BJ (cell line): ENCODE measurements at regions of chr1 and their contacts with region 1.

Region 1: DNA sequence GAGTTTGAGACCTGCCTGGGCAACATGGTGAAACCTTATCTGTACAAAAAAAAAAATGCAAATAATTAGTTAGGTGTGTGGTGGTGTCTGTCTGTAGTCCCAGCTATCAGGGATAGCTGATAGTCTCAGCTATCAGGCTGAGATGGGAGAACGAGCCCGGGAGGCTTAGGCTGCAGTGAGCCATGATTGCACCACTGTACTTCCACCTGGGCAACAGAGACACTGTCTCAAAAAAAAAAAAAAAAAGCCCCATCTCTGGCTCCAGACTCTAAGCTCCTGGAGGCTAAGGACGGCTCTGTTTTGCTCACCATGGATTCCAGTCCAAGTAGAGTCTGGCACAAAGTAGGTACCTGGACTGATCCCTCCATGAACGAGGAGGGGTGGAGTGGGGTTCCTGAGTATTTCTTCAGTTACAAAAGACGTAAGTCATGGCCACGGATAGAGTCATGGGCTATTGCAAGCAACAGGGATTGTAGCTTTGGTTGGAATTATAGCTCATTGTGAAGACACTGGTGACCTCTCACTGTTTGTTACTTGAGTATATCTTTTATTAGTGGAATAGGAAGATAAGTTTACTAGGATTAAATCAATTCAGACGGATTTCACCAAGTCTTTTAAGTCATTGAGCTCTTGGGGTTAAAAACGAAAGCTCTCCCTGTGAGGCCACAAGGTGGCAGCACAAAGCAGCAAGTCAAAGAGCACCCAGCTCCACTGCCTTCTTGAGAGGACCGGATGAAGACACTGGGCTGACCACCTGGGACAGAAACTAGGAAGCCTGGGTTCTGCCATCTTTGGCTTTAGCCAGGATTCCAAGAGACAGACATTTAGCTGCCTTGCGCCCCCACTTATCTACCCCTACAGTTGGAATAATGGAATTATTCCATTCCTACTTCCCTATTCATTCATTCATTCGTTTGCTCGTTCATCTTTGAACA is 35.6 kb upstream of the TMEM61 start:
- DNase-seq: peak; percentile 34
- H3K4me3 ChIP-seq: no peak overlapping the region
- H3K27me3 ChIP-seq: no peaks in the 10 kb centered on the region
- CTCF ChIP-seq: peak; percentile 84

Region 2: DNA sequence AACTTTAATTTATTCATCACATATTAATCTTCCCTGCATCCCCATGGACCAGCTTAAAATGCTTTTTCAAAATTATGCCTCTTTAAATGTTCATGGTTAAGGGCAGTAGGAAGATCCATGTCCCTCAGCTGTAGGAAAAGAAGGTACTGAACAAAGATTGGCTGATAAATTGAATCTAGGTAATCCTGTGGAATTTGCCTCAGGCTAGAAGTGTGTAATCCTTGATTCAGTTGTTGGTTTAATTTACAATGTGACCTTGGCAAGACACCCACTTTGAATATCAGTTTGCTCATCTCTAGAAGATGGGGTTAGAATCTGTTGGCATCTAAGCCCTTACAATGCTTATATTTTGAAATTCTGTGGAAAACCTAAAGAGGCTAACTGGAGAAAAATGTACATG is 223.2 kb before region 1 on chr1:
- CTCF ChIA-PET with region 1: no interaction called
- POLR2A ChIA-PET with region 1: no interaction called
- DNase-seq: no peak
- H3K4me3 ChIP-seq: no peak overlapping the region
- H3K27me3 ChIP-seq: no peaks in the 10 kb centered on the region
- CTCF ChIP-seq: no peak

Region 3: DNA sequence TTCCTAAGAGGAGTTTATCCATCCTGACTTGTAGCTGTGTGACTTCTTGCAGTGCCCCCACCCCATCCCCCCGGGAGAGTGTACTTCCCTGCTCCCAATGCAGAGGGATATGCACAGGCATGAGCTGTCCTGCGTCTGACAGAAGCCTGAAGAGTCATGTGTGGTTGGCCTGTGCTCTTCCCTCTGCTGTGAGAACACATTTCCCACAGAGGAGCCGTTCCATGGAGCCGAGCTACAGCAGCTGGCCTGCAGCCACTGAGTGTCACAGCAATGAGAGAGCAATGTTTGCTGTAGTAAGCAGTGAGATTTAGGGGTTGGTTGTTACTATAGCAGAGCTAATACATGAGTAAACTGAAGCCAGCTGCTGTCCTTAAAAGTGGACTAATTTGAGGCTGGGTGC is 202.6 kb before region 1 on chr1:
- CTCF ChIA-PET with region 1: no interaction called
- POLR2A ChIA-PET with region 1: no interaction called
- DNase-seq: no peak
- H3K4me3 ChIP-seq: no peak overlapping the region
- H3K27me3 ChIP-seq: no peaks in the 10 kb centered on the region
- CTCF ChIP-seq: no peak

Region 4: DNA sequence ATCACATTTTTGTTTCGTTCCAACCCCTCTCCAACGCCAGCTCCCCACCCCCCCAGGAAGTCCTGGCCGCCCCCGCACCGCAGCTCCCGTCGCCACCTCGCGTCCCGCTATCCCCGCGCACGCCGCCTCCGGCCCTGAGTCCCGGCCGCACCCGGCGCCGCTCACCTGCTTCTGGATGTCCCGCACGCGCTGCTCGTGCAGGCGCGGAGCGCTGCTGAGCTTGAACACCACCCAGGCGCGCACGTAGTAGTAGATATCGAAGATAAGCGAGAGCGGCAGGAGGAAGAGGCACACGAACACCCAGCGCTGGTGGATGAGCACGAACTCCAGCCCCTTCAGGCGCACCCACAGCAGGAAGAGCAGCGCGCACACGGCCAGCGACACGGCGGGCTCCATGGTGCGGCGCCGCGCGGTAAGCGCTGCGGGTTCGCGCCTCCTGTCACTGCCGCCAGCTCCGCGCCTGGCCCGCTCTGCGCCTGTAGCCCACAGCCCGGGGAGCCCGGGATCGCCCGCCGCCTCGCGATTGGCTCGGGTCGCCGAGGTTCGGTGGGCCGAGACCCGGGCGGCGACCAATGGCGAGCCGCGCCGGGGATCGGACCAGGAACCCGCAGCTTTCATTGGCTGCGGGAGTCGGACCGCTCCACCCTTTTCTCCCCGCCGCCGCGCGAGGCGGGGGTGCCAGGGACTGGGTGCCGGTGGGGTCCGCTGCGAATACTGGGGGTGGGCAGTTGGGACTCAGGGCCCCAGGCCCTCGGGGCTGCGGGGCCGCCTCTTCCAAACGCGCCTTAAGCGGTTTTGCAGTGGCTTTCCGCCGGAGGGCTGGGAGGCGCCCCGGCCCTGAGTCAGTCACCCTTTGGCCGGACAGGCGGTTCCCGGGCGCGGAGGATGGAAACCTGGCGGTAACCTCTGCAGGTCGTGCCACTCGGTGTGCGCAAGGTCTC is 57.9 kb before region 1 on chr1 and contains the start of gene DHCR24:
- CTCF ChIA-PET with region 1: interaction called, 16 read pairs
- POLR2A ChIA-PET with region 1: no interaction called
- DNase-seq: peak; percentile 30
- H3K4me3 ChIP-seq: peak within 1 kb of the TSS; percentile 92
- H3K27me3 ChIP-seq: no peaks in the 10 kb centered on the region
- CTCF ChIP-seq: no peak
- polyA plus RNA-seq, gene DHCR24: 43.3 and 75.0 TPM in 2 replicates

Region 5: GRCh38 chr1:54934869-54935268 is 10.0 kb before region 1 on chr1:
- CTCF ChIA-PET with region 1: interaction called, 20 read pairs
- POLR2A ChIA-PET with region 1: interaction called, 10 read pairs
- DNase-seq: peak; percentile 98
- H3K4me3 ChIP-seq: no peak overlapping the region
- H3K27me3 ChIP-seq: no peaks in the 10 kb centered on the region
- CTCF ChIP-seq: no peak

Region 6: DNA sequence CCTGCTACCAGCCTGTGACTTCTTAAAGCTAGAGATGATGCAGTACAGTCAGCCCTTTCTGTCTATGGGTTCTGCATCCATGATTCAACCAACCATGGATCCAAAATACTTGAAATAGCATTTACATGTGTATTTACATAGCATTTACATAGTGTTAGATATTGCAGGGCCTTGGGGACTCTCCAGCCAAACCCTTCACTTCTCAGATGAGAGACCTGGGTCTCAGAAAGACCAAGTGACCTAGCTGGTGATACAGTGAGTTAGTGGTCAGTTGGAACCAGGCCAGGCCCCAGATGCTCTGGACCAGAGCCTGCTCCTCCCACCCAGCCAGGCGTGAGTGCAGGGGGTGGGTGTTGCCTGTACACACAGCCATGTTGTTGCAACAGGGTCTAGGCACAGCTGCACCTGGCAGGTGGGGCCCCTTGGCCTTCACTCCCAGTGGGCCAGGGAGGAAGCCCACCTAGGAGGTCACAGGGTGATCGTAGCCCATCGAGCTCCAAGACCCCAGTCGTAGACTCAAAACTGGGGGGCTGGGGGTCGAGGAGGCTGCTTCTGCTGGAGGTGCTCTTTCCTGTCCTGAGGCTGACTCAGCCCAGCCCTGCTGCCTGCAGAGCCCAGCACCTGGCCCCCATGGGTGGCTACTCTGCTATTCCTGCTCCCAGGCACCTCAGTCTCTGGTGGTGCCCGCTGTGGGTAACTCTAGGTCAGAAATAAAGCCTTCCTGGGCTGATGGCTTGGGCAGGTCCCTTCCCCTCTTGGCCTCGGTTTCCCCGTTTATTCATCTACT is 43.2 kb after region 1 on chr1:
- CTCF ChIA-PET with region 1: interaction called, 69 read pairs
- POLR2A ChIA-PET with region 1: no interaction called
- DNase-seq: no peak
- H3K4me3 ChIP-seq: no peak overlapping the region
- H3K27me3 ChIP-seq: peaks cover 8% of the 10 kb centered on the region
- CTCF ChIP-seq: no peak

Region 7: GRCh38 chr1:55021965-55022546 is 77.2 kb after region 1 on chr1:
- CTCF ChIA-PET with region 1: interaction called, 228 read pairs
- POLR2A ChIA-PET with region 1: no interaction called
- DNase-seq: peak; percentile 40
- H3K4me3 ChIP-seq: no peak overlapping the region
- H3K27me3 ChIP-seq: peaks cover 4% of the 10 kb centered on the region
- CTCF ChIP-seq: peak; percentile 97